Heart right ventricle (tissue), 16 donors: ENCODE measurements at regions of chr5 and their contacts with region 1.

Region 1: DNA sequence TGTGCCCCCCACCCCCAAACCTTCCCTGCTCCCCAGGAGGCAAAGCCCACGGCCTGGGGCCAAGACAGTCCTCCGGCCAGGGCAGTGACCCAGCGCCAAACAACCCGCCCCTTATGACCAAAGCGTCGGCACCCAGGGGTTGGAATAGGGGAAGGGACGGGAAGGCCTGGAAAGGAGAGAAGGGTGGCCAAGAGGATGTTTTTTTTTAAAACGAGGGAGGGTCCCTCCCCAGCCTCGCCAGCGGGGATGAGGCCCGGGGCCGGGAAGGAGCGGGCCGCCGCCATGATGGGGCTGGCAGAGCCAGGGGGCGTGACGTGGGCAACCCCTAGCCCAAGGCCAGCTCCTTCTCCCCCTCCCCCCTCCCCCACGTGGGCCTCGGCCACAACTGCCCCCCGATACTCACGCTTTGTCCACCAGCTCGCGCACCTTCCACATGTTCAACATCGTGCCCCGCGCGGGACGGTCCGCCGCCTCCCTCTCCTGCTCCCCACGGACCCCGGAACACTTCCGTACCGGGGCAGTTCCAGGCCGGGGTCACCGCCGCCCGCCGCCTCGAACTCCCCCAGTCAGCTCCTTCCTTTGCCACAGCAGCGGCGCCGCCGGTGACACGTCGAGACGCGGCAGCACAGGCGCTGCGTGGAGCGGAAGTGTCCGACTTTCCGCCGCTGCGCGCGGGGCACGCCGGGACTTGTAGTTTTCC is at the start of gene CLINT1:
- DNase-seq: peak; percentile 92 to 94
- ATAC-seq: peak; percentile 98 to 99 (median 98)
- H3K4me3 ChIP-seq: peak within 1 kb of the TSS; percentile 60 to 97 (median 86)
- H3K27ac ChIP-seq: peak within 1 kb of the TSS; percentile 59 to 93 (median 90)
- H3K4me1 ChIP-seq: peaks cover 0 to 48% (median 37%) of the 10 kb centered on the region in 9 donors
- H3K27me3 ChIP-seq: no peaks in the 10 kb centered on the region
- CTCF ChIP-seq: peak in 3 of 9 donors; percentile 5 to 13 (median 8)
- total RNA-seq, gene CLINT1: 44.4 to 54.7 (median 52.0) TPM

Region 2: GRCh38 chr5:157710872-157711271 is 147.8 kb before region 1 on chr5:
- intact Hi-C with region 1: no loop called
- DNase-seq: no peak
- ATAC-seq: no peak
- H3K4me3 ChIP-seq: no peak overlapping the region
- H3K27ac ChIP-seq: no peak overlapping the region
- H3K4me1 ChIP-seq: peaks cover 0 to 7% (median 3%) of the 10 kb centered on the region in 9 donors
- H3K27me3 ChIP-seq: no peaks in the 10 kb centered on the region
- CTCF ChIP-seq: no peak

Region 3: DNA sequence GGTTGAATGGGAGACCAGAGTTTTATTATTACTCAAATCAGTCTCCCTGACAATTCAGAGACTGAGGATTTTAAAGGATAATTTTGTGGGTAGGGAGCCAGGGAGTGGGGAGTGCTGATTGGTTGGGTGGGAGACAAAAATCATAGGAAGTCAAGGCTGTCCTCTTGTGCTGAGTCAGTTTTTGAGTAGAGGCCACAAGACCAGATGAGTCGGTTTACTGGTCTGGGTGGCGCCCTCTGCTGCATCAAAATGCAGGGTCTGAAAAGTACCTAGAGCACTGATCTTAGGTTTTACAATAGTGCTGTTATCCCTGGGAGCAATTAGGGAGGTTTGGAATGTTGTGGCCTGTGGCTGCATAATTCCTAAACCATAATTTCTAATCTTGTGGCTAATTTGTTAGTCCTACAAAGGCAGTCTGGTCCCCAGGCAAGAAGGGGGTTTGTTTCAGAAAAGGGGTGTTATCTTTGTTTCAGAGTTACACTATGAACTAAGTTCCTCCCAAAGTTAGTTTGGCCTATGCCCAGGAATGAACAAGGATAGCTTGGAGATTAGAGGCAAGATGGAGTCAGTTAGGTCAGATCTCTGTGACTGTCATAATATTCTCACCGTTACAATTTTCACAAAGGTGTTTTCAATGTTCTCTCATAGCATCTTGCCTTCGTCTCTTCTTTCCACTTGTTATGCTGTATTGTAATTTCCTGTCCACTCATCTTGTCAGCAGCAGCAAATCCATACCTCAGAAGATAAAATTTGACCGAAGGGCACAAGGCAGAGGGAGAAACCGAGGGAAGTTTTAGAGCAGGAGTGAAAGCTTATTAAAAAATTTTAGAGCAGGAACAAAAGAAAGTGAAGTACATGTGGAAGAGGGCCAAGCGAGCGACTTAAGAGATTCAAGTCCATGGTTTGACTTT is 59.5 kb after region 1 on chr5:
- intact Hi-C with region 1: loop called in 7 of 10 experiments (anchors 2 to 10 kb)
- DNase-seq: peak; percentile 42 to 57
- ATAC-seq: peak in 7 of 8 donors; percentile 27 to 61 (median 45)
- H3K4me3 ChIP-seq: no peak overlapping the region
- H3K27ac ChIP-seq: peak overlapping the region in 2 of 10 donors; percentile 10 to 36
- H3K4me1 ChIP-seq: peaks cover 5 to 58% (median 40%) of the 10 kb centered on the region in 9 donors
- H3K27me3 ChIP-seq: no peaks in the 10 kb centered on the region
- CTCF ChIP-seq: peak in 8 of 9 donors; percentile 8 to 67 (median 52)

Region 4: GRCh38 chr5:157948738-157949410 is 90.2 kb after region 1 on chr5:
- intact Hi-C with region 1: loop called in 8 of 10 experiments (anchors 1 to 10 kb)
- DNase-seq: peak; percentile 70 to 93
- ATAC-seq: peak; percentile 91 to 99 (median 99)
- H3K4me3 ChIP-seq: peak overlapping the region in 3 of 10 donors; percentile 3 to 13 (median 4)
- H3K27ac ChIP-seq: peak overlapping the region in 4 of 10 donors; percentile 12 to 41 (median 24)
- H3K4me1 ChIP-seq: peaks cover 0 to 11% (median 4%) of the 10 kb centered on the region in 9 donors
- H3K27me3 ChIP-seq: no peaks in the 10 kb centered on the region
- CTCF ChIP-seq: peak; percentile 71 to 96 (median 90)

Region 5: GRCh38 chr5:157994906-157995519 is 136.3 kb after region 1 on chr5:
- intact Hi-C with region 1: loop called in 7 of 10 experiments (anchors 2 to 10 kb)
- DNase-seq: peak; percentile 58 to 60
- ATAC-seq: peak; percentile 86 to 97 (median 92)
- H3K4me3 ChIP-seq: no peak overlapping the region
- H3K27ac ChIP-seq: no peak overlapping the region
- H3K4me1 ChIP-seq: peaks cover 0 to 4% (median 0%) of the 10 kb centered on the region in 9 donors
- H3K27me3 ChIP-seq: peaks cover 0 to 4% (median 0%) of the 10 kb centered on the region in 7 donors
- CTCF ChIP-seq: peak; percentile 63 to 84 (median 78)